Activated naive CD4-positive, alpha-beta T cell treated with anti-CD3 and anti-CD28 coated beads for 36 hours (primary cell): ENCODE measurements at regions of chr3 and their contacts with region 1.

Region 1: GRCh38 chr3:23442598-23443383 is 239.7 kb downstream of the UBE2E2 start:
- DNase-seq: peak; percentile 28
- H3K4me3 Mint-ChIP-seq: no peak overlapping the region
- H3K27ac Mint-ChIP-seq: no peak overlapping the region
- H3K4me1 Mint-ChIP-seq: peaks cover 43% of the 10 kb centered on the region
- H3K27me3 Mint-ChIP-seq: no peaks in the 10 kb centered on the region

Region 2: DNA sequence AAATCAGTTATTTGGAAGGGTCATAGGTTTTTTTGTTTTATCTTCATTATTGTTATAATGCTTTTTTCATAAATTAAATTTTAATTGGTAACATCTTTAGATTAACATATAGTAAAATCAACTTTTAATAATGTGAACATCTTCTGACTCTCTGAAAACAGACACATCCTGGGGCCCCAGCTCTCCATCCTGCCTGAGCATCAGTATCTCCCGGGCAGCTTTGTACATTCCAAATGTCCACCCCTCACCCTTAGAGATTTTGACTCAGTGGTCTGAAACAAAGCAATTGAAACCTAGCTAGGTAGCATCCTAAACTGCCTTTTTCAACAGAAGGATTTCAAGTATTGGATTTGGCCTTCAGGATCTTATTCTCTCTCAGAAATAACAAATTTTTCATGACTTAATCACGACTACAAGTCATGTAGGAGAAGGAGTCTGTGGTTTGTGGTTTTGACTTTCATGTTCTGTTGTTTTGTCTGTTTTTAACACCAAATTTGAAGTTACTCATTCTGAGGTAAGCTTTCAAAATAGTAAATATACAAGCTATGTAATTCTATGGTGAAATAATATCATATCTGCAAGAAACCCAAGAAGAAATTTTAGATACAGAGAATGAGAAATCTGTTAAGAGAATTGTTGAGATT is 386.9 kb before region 1 on chr3:
- CTCF ChIA-PET with region 1: no interaction called
- intact Hi-C with region 1: loop called (anchors 10 kb)
- DNase-seq: no peak
- H3K4me3 Mint-ChIP-seq: no peak overlapping the region
- H3K27ac Mint-ChIP-seq: no peak overlapping the region
- H3K4me1 Mint-ChIP-seq: peaks cover 12% of the 10 kb centered on the region
- H3K27me3 Mint-ChIP-seq: no peaks in the 10 kb centered on the region

Region 3: DNA sequence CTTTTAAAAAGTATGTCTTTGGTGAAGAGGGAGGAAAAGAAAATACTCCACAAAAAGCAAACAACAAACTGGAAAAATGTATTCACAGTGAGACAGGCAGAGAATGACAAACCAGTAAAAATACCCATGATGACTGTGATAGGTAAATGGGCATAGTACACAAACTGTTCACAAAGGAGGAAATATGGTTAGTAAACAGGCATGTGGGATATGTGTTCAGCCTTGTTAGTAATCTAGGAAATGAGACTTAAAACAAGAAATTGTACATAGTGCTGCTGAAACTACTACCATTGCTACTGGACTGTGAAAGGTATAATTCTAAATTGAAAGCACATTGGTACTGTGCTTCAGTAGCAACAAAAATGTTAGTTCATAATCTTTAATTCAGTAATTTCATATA is 189.6 kb before region 1 on chr3:
- CTCF ChIA-PET with region 1: no interaction called
- intact Hi-C with region 1: loop called (anchors 5 kb)
- DNase-seq: no peak
- H3K4me3 Mint-ChIP-seq: no peak overlapping the region
- H3K27ac Mint-ChIP-seq: no peak overlapping the region
- H3K4me1 Mint-ChIP-seq: peaks cover 45% of the 10 kb centered on the region
- H3K27me3 Mint-ChIP-seq: no peaks in the 10 kb centered on the region

Region 4: GRCh38 chr3:23430781-23431398 is 11.9 kb before region 1 on chr3:
- CTCF ChIA-PET with region 1: no interaction called
- intact Hi-C with region 1: loop called (anchors 1 kb)
- DNase-seq: no peak
- H3K4me3 Mint-ChIP-seq: no peak overlapping the region
- H3K27ac Mint-ChIP-seq: no peak overlapping the region
- H3K4me1 Mint-ChIP-seq: peaks cover 13% of the 10 kb centered on the region
- H3K27me3 Mint-ChIP-seq: no peaks in the 10 kb centered on the region

Region 5: DNA sequence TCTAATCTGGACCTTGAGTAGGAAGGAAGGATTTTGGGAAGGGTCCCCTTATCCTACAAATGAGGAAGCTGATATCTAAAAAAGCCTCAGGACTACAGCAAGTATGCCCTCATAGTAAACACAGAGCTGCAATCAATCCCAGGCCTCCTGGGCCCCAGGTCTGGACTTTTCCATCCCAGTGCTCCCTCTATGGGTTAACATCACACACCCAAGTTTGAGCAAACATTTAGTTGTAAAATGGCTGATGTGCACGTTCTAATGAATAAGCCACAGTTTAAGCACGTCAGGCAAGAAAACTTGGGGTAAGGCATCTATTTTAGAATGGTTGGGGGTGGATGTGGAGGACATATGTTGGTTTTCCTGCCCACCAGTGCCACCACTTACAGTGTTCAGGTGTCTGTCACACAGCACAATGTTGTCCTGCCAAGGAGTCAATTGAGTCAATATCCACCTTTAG is 318.7 kb after region 1 on chr3:
- CTCF ChIA-PET with region 1: no interaction called
- intact Hi-C with region 1: loop called (anchors 1 kb)
- DNase-seq: peak; percentile 27
- H3K4me3 Mint-ChIP-seq: no peak overlapping the region
- H3K27ac Mint-ChIP-seq: no peak overlapping the region
- H3K4me1 Mint-ChIP-seq: peaks cover 24% of the 10 kb centered on the region
- H3K27me3 Mint-ChIP-seq: peaks cover 5% of the 10 kb centered on the region